GM12878 (cell line): ENCODE measurements at regions of chr1 and their contacts with region 1.

Region 1: DNA sequence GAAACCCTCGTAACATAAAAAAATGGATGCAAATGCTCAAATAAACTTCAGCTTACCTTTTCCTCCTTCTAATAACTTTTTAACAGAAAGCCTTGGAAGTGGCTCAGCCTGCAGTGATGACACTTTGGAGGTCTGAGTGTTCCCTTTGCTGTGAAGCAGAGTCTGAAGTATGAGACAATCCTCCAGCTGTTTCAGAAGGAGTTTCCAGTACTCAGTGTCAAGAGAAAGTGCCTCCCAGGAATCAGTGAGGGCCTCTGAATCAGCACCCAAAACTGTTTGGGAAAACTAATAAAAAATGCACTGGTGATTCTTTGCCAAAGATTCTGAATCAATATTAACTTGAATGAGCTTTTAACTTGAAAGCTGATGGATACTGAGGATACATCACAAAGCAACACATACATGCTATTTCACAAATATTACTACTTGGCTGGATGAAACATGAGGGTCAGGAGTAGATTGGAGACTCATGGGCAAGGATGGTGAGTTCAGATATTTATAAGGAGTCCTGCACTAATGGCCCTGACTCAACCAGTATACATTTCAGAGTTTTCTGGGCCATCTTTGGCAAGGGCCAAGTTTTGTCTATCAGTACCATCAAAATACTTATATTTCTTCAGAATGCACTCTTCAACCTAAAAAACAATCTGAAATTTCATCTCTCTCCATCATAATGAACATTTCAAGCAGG is 77.0 kb downstream of the IARS2 start:
- DNase-seq: no peak
- ATAC-seq: no peak
- H3K4me3 ChIP-seq: no peak overlapping the region
- H3K27ac ChIP-seq: no peak overlapping the region
- H3K4me1 ChIP-seq: no peaks in the 10 kb centered on the region
- H3K27me3 ChIP-seq: no peaks in the 10 kb centered on the region
- CTCF ChIP-seq: no peak
- EP300 ChIP-seq: no peak
- POLR2A ChIP-seq: no peak
- RAD21 ChIP-seq: no peak

Region 2: GRCh38 chr1:219837274-219837993 is 333.5 kb before region 1 on chr1:
- CTCF ChIA-PET with region 1: no interaction called
- POLR2A ChIA-PET with region 1: no interaction called
- RAD21 ChIA-PET with region 1: no interaction called
- SMC1A ChIA-PET with region 1: no interaction called
- in situ Hi-C with region 1: no loop called
- intact Hi-C with region 1: loop called (anchors 10 kb)
- DNase-seq: no peak
- ATAC-seq: peak; percentile 68
- H3K4me3 ChIP-seq: no peak overlapping the region
- H3K27ac ChIP-seq: no peak overlapping the region
- H3K4me1 ChIP-seq: no peaks in the 10 kb centered on the region
- H3K27me3 ChIP-seq: no peaks in the 10 kb centered on the region
- CTCF ChIP-seq: peak; percentile 34 to 62 (median 50); a peak in 5 of 6 replicates
- EP300 ChIP-seq: no peak
- POLR2A ChIP-seq: no peak
- RAD21 ChIP-seq: peak; percentile 67